Posterior vena cava (tissue), 2 donors: ENCODE measurements at regions of chr5 and their contacts with region 1.

Region 1: GRCh38 chr5:33662722-33663427 is 222.1 kb downstream of the TARS1 start:
- DNase-seq: no peak

Region 2: GRCh38 chr5:32027717-32028321 is 1635.1 kb before region 1 on chr5:
- intact Hi-C with region 1: loop called in 1 of 2 experiments (anchors 5 kb)
- DNase-seq: no peak

Region 3: GRCh38 chr5:33688066-33688465 is 25.2 kb after region 1 on chr5:
- intact Hi-C with region 1: loop called in 1 of 2 experiments (anchors 1 kb)
- DNase-seq: no peak

Region 4: DNA sequence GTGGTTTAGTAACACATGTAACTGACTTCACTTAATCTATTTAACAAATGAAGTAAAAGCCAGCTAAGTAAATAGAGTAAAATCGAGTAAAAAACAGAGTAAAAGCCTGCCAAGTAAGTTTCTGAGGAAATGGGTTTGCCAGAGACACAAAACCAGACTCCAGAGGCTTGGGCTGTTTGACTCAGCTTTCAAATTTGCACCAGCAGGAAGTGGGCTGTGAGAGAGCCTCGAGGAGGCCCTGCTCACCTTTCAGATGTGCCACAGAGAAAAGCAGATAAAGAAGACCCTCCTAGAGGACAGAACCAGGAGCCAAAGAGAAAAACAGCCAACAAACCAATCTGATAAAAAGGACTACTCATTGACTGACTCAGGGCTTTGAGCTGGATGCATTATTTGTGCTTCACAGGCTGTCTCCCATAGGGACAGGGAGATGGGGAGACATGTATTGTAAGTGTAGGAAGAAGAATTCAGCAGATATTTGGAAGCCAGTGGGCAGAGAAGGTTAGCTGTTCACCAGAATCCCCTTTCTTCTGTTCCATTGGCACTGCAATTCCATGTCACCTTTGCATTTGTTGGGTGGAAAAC is 359.3 kb after region 1 on chr5:
- intact Hi-C with region 1: no loop called
- DNase-seq: no peak